ENCODE measurements at regions of chr20 and their contacts with region 1.

Region 1: DNA sequence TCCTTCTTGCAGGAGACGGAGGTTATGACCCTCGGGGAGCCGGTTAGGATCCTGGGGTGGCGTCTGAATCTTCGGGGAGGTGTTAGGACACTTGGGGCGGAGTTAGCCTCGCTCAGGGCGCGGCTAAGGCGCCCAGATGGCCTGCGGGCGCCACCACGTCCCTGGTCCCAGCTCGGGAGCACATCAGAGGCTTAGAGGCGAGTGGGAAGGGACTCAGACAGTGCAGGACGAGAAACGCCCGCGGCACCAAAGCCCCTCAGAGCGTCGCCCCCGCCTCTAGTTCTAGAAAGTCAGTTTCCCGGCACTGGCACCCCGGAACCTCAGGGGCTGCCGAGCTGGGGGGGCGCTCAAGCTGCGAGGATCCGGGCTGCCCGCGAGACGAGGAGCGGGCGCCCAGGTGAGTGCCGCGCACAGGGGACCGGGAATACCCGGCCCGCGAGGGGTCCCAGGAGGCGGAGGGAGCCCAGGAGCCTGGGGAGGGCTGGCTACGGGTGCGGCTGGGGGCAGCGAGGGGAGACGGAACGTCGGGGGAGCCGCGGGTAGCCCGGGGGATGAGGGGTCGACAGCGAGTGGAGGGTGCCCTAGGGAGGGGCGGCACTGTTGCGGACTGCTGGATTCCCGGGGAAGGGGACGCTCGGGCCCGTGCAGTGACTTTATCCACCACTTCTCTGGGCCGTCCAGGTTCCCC is at the start of gene HCK:
- DNase-seq: peak; percentile 46
- ATAC-seq: peak; percentile 54
- H3K4me3 Mint-ChIP-seq: peak within 1 kb of the TSS; percentile 93
- H3K27ac Mint-ChIP-seq: peak within 1 kb of the TSS; percentile 93
- H3K4me1 Mint-ChIP-seq: peaks cover 54% of the 10 kb centered on the region
- H3K27me3 Mint-ChIP-seq: no peaks in the 10 kb centered on the region
- CTCF ChIP-seq: no peak
- total RNA-seq, gene HCK: 183 TPM in 2 replicates

Region 2: DNA sequence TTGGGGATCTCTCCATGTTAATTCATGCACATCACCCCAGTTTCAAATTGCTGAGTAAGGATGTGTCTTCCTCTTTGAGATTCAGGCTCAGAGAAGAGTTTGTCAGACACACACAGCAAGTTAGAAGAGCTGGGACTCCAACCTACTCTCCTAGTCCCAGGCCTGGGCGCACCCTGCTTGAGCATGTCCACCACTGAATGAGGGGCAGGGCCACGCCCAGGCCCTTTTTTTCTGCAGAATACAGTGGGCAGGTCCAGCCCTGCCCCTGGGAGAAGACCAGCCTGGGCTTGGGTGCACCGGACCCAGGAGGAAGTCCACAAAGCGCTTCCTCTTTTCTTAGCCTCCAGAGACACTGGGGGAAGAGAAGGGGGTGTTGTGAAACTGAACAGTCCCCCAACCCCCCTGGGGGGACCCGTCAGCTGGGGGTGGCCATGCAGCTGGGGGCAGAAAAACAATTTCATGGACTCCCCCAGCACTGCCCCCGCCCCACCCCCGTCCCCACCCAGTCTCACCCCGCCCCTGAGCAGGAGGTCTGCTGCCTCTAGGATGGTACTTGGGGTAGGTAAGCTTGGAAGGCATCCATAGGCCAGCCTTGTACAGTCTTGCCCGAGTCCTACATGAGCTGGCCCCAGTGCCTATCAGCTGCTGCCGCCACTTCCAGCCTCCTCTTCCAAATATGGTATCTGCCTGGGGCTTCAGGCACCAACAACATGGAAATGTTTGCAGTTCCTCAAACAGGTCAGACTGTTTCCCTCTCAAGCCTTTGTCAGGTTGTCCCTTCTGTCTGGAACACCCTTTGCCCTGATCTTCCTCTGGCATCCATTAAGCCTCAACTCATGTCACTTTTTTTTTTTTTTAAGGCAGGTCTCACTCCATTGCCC is 11.9 kb before region 1 on chr20:
- CTCF ChIA-PET with region 1: interaction called, 20 read pairs
- POLR2A ChIA-PET with region 1: interaction called, 453 read pairs
- intact Hi-C with region 1: loop called (anchors 1 kb)
- DNase-seq: peak; percentile 77
- ATAC-seq: peak; percentile 88
- H3K4me3 Mint-ChIP-seq: peak overlapping the region; percentile 78
- H3K27ac Mint-ChIP-seq: peak overlapping the region; percentile 90
- H3K4me1 Mint-ChIP-seq: peaks cover 80% of the 10 kb centered on the region
- H3K27me3 Mint-ChIP-seq: no peaks in the 10 kb centered on the region
- CTCF ChIP-seq: no peak

Region 3: GRCh38 chr20:32062776-32063170 is 10.5 kb after region 1 on chr20:
- CTCF ChIA-PET with region 1: interaction called, 6 read pairs
- POLR2A ChIA-PET with region 1: interaction called, 39 read pairs
- intact Hi-C with region 1: loop called (anchors 1 kb)
- DNase-seq: no peak
- ATAC-seq: peak; percentile 84
- H3K4me3 Mint-ChIP-seq: peak overlapping the region; percentile 35
- H3K27ac Mint-ChIP-seq: peak overlapping the region; percentile 75
- H3K4me1 Mint-ChIP-seq: peaks cover 54% of the 10 kb centered on the region
- H3K27me3 Mint-ChIP-seq: no peaks in the 10 kb centered on the region
- CTCF ChIP-seq: no peak

Region 4: GRCh38 chr20:32069711-32070110 is 17.5 kb after region 1 on chr20:
- CTCF ChIA-PET with region 1: no interaction called
- POLR2A ChIA-PET with region 1: interaction called, 39 read pairs
- intact Hi-C with region 1: loop called (anchors 2 kb)
- DNase-seq: no peak
- ATAC-seq: no peak
- H3K4me3 Mint-ChIP-seq: no peak overlapping the region
- H3K27ac Mint-ChIP-seq: no peak overlapping the region
- H3K4me1 Mint-ChIP-seq: peaks cover 40% of the 10 kb centered on the region
- H3K27me3 Mint-ChIP-seq: no peaks in the 10 kb centered on the region
- CTCF ChIP-seq: no peak

Region 5: GRCh38 chr20:32091888-32092346 is 39.7 kb after region 1 on chr20:
- CTCF ChIA-PET with region 1: interaction called, 4 read pairs
- POLR2A ChIA-PET with region 1: interaction called, 15 read pairs
- intact Hi-C with region 1: no loop called
- DNase-seq: peak; percentile 68
- ATAC-seq: peak; percentile 92
- H3K4me3 Mint-ChIP-seq: no peak overlapping the region
- H3K27ac Mint-ChIP-seq: no peak overlapping the region
- H3K4me1 Mint-ChIP-seq: peaks cover 14% of the 10 kb centered on the region
- H3K27me3 Mint-ChIP-seq: no peaks in the 10 kb centered on the region
- CTCF ChIP-seq: peak; percentile 70

Region 6: GRCh38 chr20:32207626-32208498 is 155.6 kb after region 1 on chr20 and contains the starts of genes PLAGL2 and POFUT1:
- CTCF ChIA-PET with region 1: no interaction called
- POLR2A ChIA-PET with region 1: no interaction called
- intact Hi-C with region 1: loop called (anchors 5 kb)
- DNase-seq: peak; percentile 92
- ATAC-seq: peak; percentile 97
- H3K4me3 Mint-ChIP-seq: peak within 1 kb of the TSS; percentile 91
- H3K27ac Mint-ChIP-seq: peak within 1 kb of the TSS; percentile 85
- H3K4me1 Mint-ChIP-seq: peaks cover 62% of the 10 kb centered on the region
- H3K27me3 Mint-ChIP-seq: no peaks in the 10 kb centered on the region
- CTCF ChIP-seq: no peak
- total RNA-seq, gene PLAGL2: 17.3 and 17.9 TPM in 2 replicates
- total RNA-seq, gene POFUT1: 20.4 and 24.0 TPM in 2 replicates